ENCODE measurements at regions of chr22 and their contacts with region 1.

Region 1: GRCh38 chr22:50326959-50327710 is at the start of gene DENND6B:
- DNase-seq: peak; percentile 95
- ATAC-seq: peak; percentile 97
- total RNA-seq, gene DENND6B: 1.7 TPM

Region 2: DNA sequence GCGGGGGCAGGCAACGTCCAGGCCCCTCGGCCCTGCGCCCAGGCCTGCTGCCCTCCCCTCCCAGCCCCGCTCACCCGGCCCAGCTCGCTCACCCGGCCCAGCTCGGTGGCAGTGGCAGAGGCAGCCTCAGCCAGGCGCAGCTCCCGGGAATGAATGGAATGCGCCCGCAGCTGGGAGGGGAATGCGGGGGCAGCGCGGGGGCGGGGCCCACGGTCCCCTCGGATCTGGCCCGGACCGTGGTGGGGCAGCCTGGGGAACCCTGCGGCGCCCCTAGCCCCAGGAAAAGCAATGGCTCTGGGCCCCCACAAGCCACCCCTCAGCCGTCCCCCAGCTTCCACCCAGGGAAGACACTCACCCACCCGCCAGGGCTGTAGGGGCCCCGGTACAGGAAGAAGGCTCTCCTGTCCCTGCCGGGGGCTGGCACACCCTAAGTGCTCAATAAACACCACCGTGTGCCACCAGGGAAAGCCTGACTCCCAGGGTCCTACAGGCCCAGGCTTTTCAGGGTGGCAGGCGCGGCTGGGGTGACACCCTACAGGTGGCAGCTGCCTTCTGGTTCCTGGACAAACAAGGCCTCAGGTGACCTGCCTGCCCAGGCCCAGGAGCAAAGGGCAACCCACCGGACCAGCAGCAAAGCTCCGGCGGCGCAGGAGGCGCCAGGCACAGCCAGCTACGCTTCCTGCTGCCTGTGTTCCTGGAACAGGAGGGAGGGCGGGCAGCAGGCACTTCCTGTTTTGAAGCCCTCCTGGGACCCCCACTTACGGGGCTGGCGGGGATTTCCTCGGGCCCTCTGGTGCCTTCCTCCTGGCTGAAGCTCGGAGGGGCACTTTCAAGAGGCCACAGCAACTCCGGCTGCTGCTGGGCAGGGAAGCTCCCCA is 33.5 kb before region 1 on chr22:
- intact Hi-C with region 1: loop called (anchors 5 kb)
- DNase-seq: peak; percentile 85
- ATAC-seq: peak; percentile 90

Region 3: DNA sequence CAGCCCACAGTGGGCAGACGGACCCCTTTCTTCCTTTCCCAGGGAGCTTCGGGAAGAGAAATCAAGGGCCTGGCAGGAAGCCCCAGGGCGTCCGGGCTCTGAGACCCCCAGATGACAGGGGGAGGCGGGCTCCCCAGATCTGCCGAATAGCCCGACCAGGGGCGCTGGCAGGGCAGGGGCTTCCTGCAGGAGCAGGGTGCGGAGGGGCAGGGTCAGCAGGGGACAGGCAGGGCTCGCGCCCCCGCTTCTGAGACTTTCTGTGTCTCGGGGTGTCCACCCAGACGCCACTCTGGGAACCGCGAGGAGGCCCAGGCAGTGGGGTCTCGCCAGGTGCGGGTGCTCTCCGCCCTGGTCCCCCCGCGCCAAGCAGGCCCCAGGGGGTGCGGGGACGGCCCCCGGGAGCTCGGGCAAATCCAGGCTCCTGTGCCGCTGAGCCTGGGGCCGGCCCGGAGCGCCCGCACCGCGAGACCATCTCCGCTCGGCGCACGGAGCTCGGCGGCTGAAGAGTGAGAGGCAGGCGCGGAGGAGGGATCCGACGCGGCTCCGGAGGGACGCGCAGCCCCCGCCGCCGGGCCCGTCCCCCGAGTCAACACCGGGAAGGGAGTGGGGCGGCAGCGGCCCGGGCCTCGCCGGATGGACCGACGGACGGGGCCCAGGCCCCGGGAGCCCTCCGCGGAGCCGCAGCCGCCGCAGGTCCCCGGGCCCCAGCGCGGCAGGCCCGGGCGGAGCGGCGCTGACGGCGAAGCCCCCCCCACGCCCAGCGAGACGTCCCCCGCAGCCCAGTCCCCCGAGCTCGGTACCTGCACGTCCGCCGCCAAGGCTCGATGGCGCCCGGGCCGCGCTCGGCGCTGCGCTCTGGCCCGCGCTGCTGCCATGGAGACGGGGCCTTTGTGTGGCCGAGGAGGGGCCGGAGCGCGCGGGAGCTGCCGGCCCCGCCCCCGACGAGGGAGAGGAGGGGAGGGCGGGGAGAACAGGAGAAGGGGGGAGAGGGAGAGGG is 20.1 kb before region 1 on chr22 and contains the start of gene PLXNB2:
- intact Hi-C with region 1: loop called (anchors 1 kb)
- DNase-seq: peak; percentile 91
- ATAC-seq: peak; percentile 61
- total RNA-seq, gene PLXNB2: 70.6 TPM

Region 4: DNA sequence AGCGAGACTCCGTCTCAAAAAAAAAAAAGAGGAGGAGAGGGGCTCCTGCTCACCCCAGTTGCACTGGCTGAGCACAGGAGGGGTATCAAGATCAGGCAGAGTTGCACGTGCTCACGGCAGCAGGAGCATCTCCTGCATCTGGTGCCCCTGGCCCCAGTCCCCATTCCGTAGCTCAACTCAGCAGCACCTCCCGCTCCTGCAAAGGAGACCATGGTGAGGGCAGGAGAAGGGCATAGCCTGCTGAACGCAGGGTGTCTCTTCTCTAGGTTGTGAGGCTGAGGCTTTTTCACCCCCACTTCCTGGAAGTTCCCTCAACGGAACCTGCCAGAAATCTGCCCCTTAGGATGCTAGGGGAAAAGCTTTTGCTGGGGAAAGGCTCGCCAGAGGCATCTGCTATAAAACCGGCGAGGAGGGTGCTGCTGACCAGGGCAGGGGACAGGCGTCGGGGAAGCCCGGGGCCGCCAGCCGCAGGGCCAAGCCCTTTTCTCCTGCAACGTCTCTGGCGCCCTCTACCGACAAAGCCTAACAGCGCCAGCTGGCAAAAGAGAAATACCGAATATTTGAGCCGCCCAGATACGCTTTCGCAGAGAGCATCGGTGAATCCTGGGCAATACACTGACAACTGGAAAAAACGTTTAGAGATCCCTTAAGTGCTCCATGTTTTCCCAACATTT is 15.0 kb after region 1 on chr22:
- intact Hi-C with region 1: loop called (anchors 1 kb)
- DNase-seq: peak; percentile 91
- ATAC-seq: peak; percentile 85

Measured in Right ventricle myocardium inferior (tissue), 1 donor.